Activated B cell treated with CpG ODN at 0.5 μM for 24 hours (primary cell): ENCODE measurements at regions of chr10 and their contacts with region 1.

Region 1: GRCh38 chr10:13160934-13161856 is at the start of gene MCM10:
- DNase-seq: peak; percentile 88
- ATAC-seq: peak; percentile 100
- H3K4me3 Mint-ChIP-seq: peak within 1 kb of the TSS; percentile 89
- H3K27ac Mint-ChIP-seq: peak within 1 kb of the TSS; percentile 43
- H3K4me1 Mint-ChIP-seq: peaks cover 14% of the 10 kb centered on the region
- H3K27me3 Mint-ChIP-seq: no peaks in the 10 kb centered on the region
- CTCF ChIP-seq: peak; percentile 77
- total RNA-seq, gene MCM10: 3.7 and 4.6 TPM in 2 replicates

Region 2: DNA sequence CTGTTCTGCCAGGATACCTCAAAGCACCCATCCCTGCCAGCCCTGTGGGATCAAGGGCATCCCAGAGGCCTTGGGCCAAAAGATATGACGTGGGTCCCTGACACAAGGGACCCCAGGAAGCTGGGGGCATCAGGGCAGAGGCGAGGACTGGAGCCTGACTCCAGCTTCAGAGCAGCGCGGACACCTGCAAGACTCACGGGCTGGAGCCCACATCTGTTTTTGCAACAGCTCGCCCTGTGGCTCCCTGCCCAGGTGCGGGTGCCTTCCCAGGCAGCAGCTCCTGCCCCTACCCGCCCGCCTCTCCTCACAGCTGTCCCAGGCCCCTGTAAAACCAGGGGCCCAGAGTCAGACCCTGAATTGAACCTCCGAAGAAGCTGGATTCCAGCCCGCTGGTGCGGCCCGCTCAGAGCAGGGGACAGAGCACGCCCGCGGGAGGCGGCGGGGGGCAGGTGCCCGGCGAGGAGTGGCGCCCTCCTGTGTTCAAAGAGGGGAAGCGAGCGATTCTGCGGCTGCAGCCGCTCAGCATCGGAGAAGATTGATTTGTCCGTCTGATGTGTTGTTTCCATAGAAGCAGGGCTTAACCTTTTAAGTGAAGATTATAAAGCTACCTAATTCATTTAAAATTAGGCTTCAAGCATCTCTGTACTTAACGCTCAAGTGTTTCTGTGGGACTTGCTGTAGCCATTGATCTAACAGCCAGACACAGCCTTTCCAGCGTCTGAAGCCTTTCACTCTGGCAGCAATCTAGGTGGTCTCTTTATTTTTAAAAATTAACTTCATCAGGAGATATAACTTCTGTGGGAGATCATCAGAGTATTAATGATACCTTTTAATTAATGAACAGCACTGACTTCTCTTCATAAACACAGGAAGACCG is 279.2 kb after region 1 on chr10:
- CTCF ChIA-PET with region 1: no interaction called
- POLR2A ChIA-PET with region 1: no interaction called
- intact Hi-C with region 1: loop called (anchors 1 kb)
- DNase-seq: peak; percentile 65
- ATAC-seq: peak; percentile 91
- H3K4me3 Mint-ChIP-seq: peak overlapping the region; percentile 64
- H3K27ac Mint-ChIP-seq: no peak overlapping the region
- H3K4me1 Mint-ChIP-seq: peaks cover 11% of the 10 kb centered on the region
- H3K27me3 Mint-ChIP-seq: peaks cover 41% of the 10 kb centered on the region
- CTCF ChIP-seq: peak; percentile 26

Region 3: GRCh38 chr10:13536674-13537366 is 375.6 kb after region 1 on chr10:
- CTCF ChIA-PET with region 1: no interaction called
- POLR2A ChIA-PET with region 1: no interaction called
- intact Hi-C with region 1: loop called (anchors 2 kb)
- DNase-seq: no peak
- ATAC-seq: peak; percentile 58
- H3K4me3 Mint-ChIP-seq: no peak overlapping the region
- H3K27ac Mint-ChIP-seq: no peak overlapping the region
- H3K4me1 Mint-ChIP-seq: no peaks in the 10 kb centered on the region
- H3K27me3 Mint-ChIP-seq: peaks cover 45% of the 10 kb centered on the region
- CTCF ChIP-seq: no peak